HepG2 (cell line): ENCODE measurements at regions of chrX and their contacts with region 1.

Region 1: DNA sequence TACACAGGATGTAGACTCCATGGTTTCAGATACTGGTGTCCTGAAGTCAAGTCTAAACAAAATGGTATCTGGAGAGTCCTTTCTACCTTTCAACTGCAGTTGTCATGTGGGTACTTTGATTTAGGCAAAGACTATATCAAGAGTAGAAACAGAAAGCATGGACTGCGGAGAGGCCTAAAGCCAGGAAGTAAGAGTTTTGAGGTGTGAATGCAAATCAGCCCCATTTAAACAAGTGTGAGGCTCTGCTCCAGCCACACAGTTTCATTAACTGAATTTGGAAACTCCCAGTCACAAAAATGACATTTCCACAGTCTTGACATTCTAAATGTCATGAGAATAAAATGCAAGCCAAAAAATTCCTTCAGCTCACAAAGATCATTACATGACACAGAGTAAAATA is 87.2 kb upstream of the MCF2 start:
- DNase-seq: no peak
- ATAC-seq: no peak
- H3K4me3 ChIP-seq: no peak overlapping the region
- H3K27ac ChIP-seq: no peak overlapping the region
- H3K4me1 ChIP-seq: no peaks in the 10 kb centered on the region
- H3K27me3 ChIP-seq: no peaks in the 10 kb centered on the region
- CTCF ChIP-seq: no peak
- EP300 ChIP-seq: no peak
- POLR2A ChIP-seq: no peak
- RAD21 ChIP-seq: no peak

Region 2: GRCh38 chrX:139932901-139933796 is 138.0 kb after region 1 on chrX and contains the start of gene ATP11C:
- CTCF ChIA-PET with region 1: no interaction called
- POLR2A ChIA-PET with region 1: interaction called, 3 read pairs
- in situ Hi-C with region 1: no loop called
- intact Hi-C with region 1: loop called (anchors 5 kb)
- DNase-seq: peak; percentile 70
- ATAC-seq: peak; percentile 84
- H3K4me3 ChIP-seq: peak within 1 kb of the TSS; percentile 72 to 83 (median 76)
- H3K27ac ChIP-seq: peak within 1 kb of the TSS; percentile 93
- H3K4me1 ChIP-seq: peaks cover 22% of the 10 kb centered on the region
- H3K27me3 ChIP-seq: no peaks in the 10 kb centered on the region; a peak in 1 of 5 replicates
- CTCF ChIP-seq: peak; percentile 66
- EP300 ChIP-seq: no peak
- POLR2A ChIP-seq: peak; percentile 61 to 75
- RAD21 ChIP-seq: no peak
- total RNA-seq, gene ATP11C: 16.0 and 16.9 TPM in 2 replicates